Cardiac septum (tissue), 1 donor: ENCODE measurements at regions of chr11 and their contacts with region 1.

Region 1: GRCh38 chr11:68447015-68447801 is 13.3 kb upstream of the PPP6R3 start:
- DNase-seq: peak; percentile 92

Region 2: DNA sequence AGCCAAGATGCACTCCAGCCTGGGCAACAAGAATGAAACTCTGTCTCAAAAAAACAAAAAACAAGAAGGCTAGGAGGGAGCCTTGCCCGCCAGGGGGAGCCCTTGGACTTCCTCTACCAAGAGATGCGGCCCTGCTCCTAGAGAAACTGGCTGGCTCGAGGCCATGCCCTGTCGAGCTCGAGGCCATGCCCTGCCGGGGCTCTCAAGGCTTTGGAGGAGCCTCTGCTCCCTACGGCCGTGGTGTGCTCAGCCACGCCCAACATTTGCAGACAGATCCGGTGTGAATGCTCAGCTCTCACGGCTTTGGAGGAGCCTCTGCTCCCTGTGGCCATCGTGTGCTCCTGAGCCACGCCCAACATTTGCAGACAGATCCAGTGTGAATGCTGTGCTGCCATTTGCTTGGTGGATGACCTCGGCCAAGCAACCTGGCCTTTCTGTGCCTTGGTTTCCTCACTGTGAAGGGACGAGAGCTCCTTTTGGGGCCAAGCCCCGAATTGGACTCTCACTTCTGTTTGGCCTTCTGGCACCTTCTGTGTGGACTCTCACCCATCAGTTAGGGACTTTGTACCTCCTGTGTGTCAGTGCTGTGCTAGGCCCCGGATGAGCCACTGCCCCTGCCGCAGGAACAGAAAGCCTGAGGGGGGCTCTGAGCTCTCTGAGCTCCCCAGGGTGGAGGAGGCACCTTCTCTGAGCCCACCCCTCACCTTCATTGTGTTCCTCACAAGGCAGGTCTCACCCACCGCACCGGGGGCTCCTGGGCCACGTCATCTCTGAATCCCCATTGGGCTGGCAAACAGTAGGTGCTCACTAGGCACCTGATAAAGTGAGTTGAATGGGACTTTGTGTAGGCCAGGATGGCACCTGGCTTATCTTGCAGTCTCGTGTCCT is 189.5 kb before region 1 on chr11:
- intact Hi-C with region 1: loop called (anchors 1 kb)
- DNase-seq: peak; percentile 96

Region 3: GRCh38 chr11:68383976-68384501 is 63.2 kb before region 1 on chr11:
- intact Hi-C with region 1: loop called (anchors 5 kb)
- DNase-seq: peak; percentile 87